ENCODE measurements at regions of chr1 and their contacts with region 1.

Region 1: GRCh38 chr1:47192458-47193384 is 2.9 kb upstream of the PDZK1IP1 start:
- DNase-seq: peak; percentile 42 to 59 (median 53)
- H3K4me3 ChIP-seq: no peak overlapping the region
- H3K4me3 Mint-ChIP-seq: no peak overlapping the region
- H3K27ac ChIP-seq: no peak overlapping the region
- H3K27ac Mint-ChIP-seq: no peak overlapping the region
- H3K4me1 ChIP-seq: no peaks in the 10 kb centered on the region
- H3K4me1 Mint-ChIP-seq: peaks cover 0 to 4% (median 4%) of the 10 kb centered on the region in 4 donors
- H3K27me3 ChIP-seq: no peaks in the 10 kb centered on the region
- H3K27me3 Mint-ChIP-seq: peaks cover 7 to 9% of the 10 kb centered on the region in 2 donors

Region 2: GRCh38 chr1:47207811-47208373 is 15.2 kb after region 1 on chr1:
- CTCF ChIA-PET with region 1: interaction called, 18 read pairs
- POLR2A ChIA-PET with region 1: no interaction called
- intact Hi-C with region 1: no loop called
- DNase-seq: no peak
- H3K4me3 ChIP-seq: no peak overlapping the region
- H3K4me3 Mint-ChIP-seq: no peak overlapping the region
- H3K27ac ChIP-seq: no peak overlapping the region
- H3K27ac Mint-ChIP-seq: no peak overlapping the region
- H3K4me1 ChIP-seq: no peaks in the 10 kb centered on the region
- H3K4me1 Mint-ChIP-seq: peaks cover 0 to 5% (median under 1%) of the 10 kb centered on the region in 4 donors
- H3K27me3 ChIP-seq: no peaks in the 10 kb centered on the region
- H3K27me3 Mint-ChIP-seq: peaks cover 18 to 26% of the 10 kb centered on the region in 2 donors

Region 3: GRCh38 chr1:47333922-47334764 is 141.4 kb after region 1 on chr1:
- CTCF ChIA-PET with region 1: interaction called, 3 read pairs
- POLR2A ChIA-PET with region 1: no interaction called
- intact Hi-C with region 1: loop called (anchors 1 kb)
- DNase-seq: peak; percentile 74 to 85 (median 79)
- H3K4me3 ChIP-seq: peak overlapping the region; percentile 86 to 99
- H3K4me3 Mint-ChIP-seq: peak overlapping the region; percentile 91 to 94 (median 93)
- H3K27ac ChIP-seq: peak overlapping the region; percentile 88
- H3K27ac Mint-ChIP-seq: peak overlapping the region in 6 of 7 donors; percentile 90 to 96 (median 92)
- H3K4me1 ChIP-seq: peaks cover 40% of the 10 kb centered on the region
- H3K4me1 Mint-ChIP-seq: peaks cover 10 to 28% (median 15%) of the 10 kb centered on the region in 4 donors
- H3K27me3 ChIP-seq: no peaks in the 10 kb centered on the region
- H3K27me3 Mint-ChIP-seq: no peaks in the 10 kb centered on the region

Region 4: GRCh38 chr1:47710329-47711071 is 517.8 kb after region 1 on chr1:
- CTCF ChIA-PET with region 1: interaction called, 9 read pairs
- POLR2A ChIA-PET with region 1: no interaction called
- intact Hi-C with region 1: loop called (anchors 1 kb)
- DNase-seq: peak in 4 of 5 donors; percentile 54 to 67 (median 54)
- H3K4me3 ChIP-seq: no peak overlapping the region
- H3K4me3 Mint-ChIP-seq: peak overlapping the region in 7 of 8 donors; percentile 35 to 65 (median 57)
- H3K27ac ChIP-seq: no peak overlapping the region
- H3K27ac Mint-ChIP-seq: peak overlapping the region in 1 of 7 donors; percentile 18
- H3K4me1 ChIP-seq: peaks cover 20% of the 10 kb centered on the region
- H3K4me1 Mint-ChIP-seq: peaks cover 0 to 17% (median 8%) of the 10 kb centered on the region in 4 donors
- H3K27me3 ChIP-seq: peaks cover 31% of the 10 kb centered on the region
- H3K27me3 Mint-ChIP-seq: peaks cover 40 to 47% of the 10 kb centered on the region in 2 donors